Transverse colon (tissue), 4 donors: ENCODE measurements at regions of chr17 and their contacts with region 1.

Region 1: GRCh38 chr17:42677008-42677857 is 439 bp upstream of the PLEKHH3 start:
- DNase-seq: peak; percentile 100
- H3K4me3 ChIP-seq: peak overlapping the region; percentile 75 to 91 (median 85)
- H3K27ac ChIP-seq: peak overlapping the region; percentile 92 to 98 (median 96)
- H3K4me1 ChIP-seq: peaks cover 34 to 80% (median 62%) of the 10 kb centered on the region in 4 donors
- H3K27me3 ChIP-seq: peaks cover 11% of the 10 kb centered on the region
- CTCF ChIP-seq: no peak
- EP300 ChIP-seq: no peak
- POLR2A ChIP-seq: no peak

Region 2: GRCh38 chr17:42577532-42578281 is 99.5 kb before region 1 on chr17 and contains the start of gene PSMC3IP:
- in situ Hi-C with region 1: loop called in 3 of 4 experiments (anchors 25 kb)
- intact Hi-C with region 1: no loop called
- DNase-seq: peak; percentile 97
- H3K4me3 ChIP-seq: peak within 1 kb of the TSS; percentile 27 to 71 (median 60)
- H3K27ac ChIP-seq: peak within 1 kb of the TSS; percentile 87 to 96 (median 91)
- H3K4me1 ChIP-seq: peaks cover 11 to 23% (median 14%) of the 10 kb centered on the region in 4 donors
- H3K27me3 ChIP-seq: no peaks in the 10 kb centered on the region
- CTCF ChIP-seq: peak in 4 of 5 experiments; percentile 28 to 61 (median 48)
- EP300 ChIP-seq: no peak
- POLR2A ChIP-seq: peak; percentile 82
- total RNA-seq, gene PSMC3IP: 0.96 to 2.6 (median 1.3) TPM in 3 of 4 donors, not detected in the other

Region 3: DNA sequence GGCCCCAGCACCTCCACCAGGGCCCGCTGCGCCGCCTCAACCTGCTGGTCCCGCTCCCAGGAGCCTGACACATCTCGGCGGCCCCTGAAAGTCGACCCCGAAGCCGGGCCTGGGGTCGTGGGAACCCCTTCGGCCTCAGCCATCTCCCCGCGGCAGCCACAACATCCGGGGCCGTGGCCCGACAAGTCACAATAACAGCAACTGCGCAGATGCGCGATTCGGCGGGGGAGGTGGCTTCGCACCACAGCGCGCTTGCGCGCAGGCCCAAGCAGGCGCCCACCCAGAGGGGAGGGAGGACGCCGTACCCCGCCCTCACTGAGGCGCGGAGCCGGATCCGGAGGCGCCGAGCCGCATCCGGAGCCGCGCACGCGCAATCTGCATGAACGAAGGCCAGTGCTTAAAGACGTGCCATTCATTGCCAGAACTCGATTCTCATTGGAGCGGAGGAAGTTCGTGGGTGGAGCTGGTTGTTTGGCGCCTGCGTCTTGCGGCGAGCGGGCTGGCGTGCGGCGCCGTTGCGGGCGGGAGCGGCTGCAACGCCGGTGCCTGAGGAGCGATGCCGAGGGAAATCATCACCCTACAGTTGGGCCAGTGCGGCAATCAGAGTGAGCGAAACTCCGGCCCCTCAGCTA is 67.9 kb before region 1 on chr17 and contains the starts of genes RETREG3 and TUBG1:
- in situ Hi-C with region 1: loop called in 1 of 4 experiments (anchors 10 kb)
- intact Hi-C with region 1: loop called (anchors 10 kb)
- DNase-seq: peak; percentile 99
- H3K4me3 ChIP-seq: peak within 1 kb of the TSS; percentile 57 to 83 (median 80)
- H3K27ac ChIP-seq: peak within 1 kb of the TSS; percentile 91 to 97 (median 92)
- H3K4me1 ChIP-seq: peaks cover 20 to 37% (median 31%) of the 10 kb centered on the region in 4 donors
- H3K27me3 ChIP-seq: no peaks in the 10 kb centered on the region
- CTCF ChIP-seq: peak in 4 of 5 experiments; percentile 38 to 55 (median 40)
- EP300 ChIP-seq: no peak
- POLR2A ChIP-seq: peak; percentile 93
- total RNA-seq, gene RETREG3: 47.2 to 71.8 (median 59.0) TPM
- total RNA-seq, gene TUBG1: 6.0 to 27.7 (median 14.3) TPM